ENCODE measurements at regions of chr10 and their contacts with region 1.

Region 1: GRCh38 chr10:116287906-116288501 is 15.0 kb upstream of the GFRA1 start:
- DNase-seq: no peak
- ATAC-seq: no peak
- H3K4me3 ChIP-seq: no peak overlapping the region
- H3K4me3 Mint-ChIP-seq: no peak overlapping the region
- H3K27ac ChIP-seq: no peak overlapping the region
- H3K27ac Mint-ChIP-seq: no peak overlapping the region
- H3K4me1 ChIP-seq: no peaks in the 10 kb centered on the region
- H3K4me1 Mint-ChIP-seq: peaks cover 0 to 2% (median 0%) of the 10 kb centered on the region in 7 donors
- H3K27me3 ChIP-seq: no peaks in the 10 kb centered on the region
- H3K27me3 Mint-ChIP-seq: peaks cover 0 to 16% (median 6%) of the 10 kb centered on the region in 5 donors

Region 2: DNA sequence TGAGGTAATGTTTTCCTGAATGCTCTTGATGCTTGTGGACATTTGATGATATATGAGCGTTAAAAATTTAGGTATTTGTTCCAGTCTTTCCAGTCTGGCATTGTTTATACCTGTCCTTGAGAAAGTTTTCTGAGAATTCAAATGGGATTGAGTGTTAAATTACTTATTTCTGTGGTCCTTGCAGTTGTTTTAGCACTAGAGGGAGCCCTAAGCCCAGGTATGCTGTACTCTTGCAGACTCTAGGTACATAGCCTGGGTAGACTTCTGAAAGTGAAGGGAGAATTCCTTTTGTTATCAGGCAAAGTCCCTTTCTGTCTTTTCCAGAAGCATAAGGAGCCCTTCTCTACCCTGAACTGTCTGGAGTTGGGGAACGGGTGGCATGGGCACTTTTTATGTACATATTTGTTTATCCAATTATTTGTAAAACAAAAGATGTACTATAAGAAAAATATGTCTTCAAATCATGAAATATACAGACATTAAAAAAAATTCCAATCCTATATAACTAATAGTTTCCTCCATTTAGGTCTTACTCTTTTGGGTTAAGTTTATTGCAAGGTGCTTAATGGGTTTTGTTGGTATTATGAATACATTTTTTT is 932.7 kb before region 1 on chr10:
- CTCF ChIA-PET with region 1: no interaction called
- POLR2A ChIA-PET with region 1: no interaction called
- intact Hi-C with region 1: loop called in 1 of 2 experiments (anchors 5 kb)
- DNase-seq: peak in 1 of 9 donors; percentile 2
- ATAC-seq: no peak
- H3K4me3 ChIP-seq: no peak overlapping the region
- H3K4me3 Mint-ChIP-seq: no peak overlapping the region
- H3K27ac ChIP-seq: no peak overlapping the region
- H3K27ac Mint-ChIP-seq: no peak overlapping the region
- H3K4me1 ChIP-seq: no peaks in the 10 kb centered on the region
- H3K4me1 Mint-ChIP-seq: no peaks in the 10 kb centered on the region
- H3K27me3 ChIP-seq: no peaks in the 10 kb centered on the region
- H3K27me3 Mint-ChIP-seq: no peaks in the 10 kb centered on the region

Region 3: GRCh38 chr10:116272440-116273283 is 15.3 kb before region 1 on chr10 and contains the start of gene GFRA1:
- CTCF ChIA-PET with region 1: no interaction called
- POLR2A ChIA-PET with region 1: no interaction called
- intact Hi-C with region 1: no loop called
- DNase-seq: no peak
- ATAC-seq: no peak
- H3K4me3 ChIP-seq: no peak within 1 kb of the TSS
- H3K4me3 Mint-ChIP-seq: peak within 1 kb of the TSS in 8 of 10 donors; percentile 10 to 69 (median 50)
- H3K27ac ChIP-seq: no peak within 1 kb of the TSS
- H3K27ac Mint-ChIP-seq: peak within 1 kb of the TSS in 1 of 9 donors; percentile 71
- H3K4me1 ChIP-seq: no peaks in the 10 kb centered on the region
- H3K4me1 Mint-ChIP-seq: peaks cover 5 to 14% (median 10%) of the 10 kb centered on the region in 7 donors
- H3K27me3 ChIP-seq: peaks cover 0 to 5% of the 10 kb centered on the region in 2 donors
- H3K27me3 Mint-ChIP-seq: peaks cover 65 to 78% (median 73%) of the 10 kb centered on the region in 5 donors
- total RNA-seq, gene GFRA1: not detected

Region 4: GRCh38 chr10:116756277-116756676 is 468.3 kb after region 1 on chr10:
- CTCF ChIA-PET with region 1: no interaction called
- POLR2A ChIA-PET with region 1: no interaction called
- intact Hi-C with region 1: no loop called
- DNase-seq: no peak
- ATAC-seq: no peak
- H3K4me3 ChIP-seq: no peak overlapping the region
- H3K4me3 Mint-ChIP-seq: no peak overlapping the region
- H3K27ac ChIP-seq: no peak overlapping the region
- H3K27ac Mint-ChIP-seq: no peak overlapping the region
- H3K4me1 ChIP-seq: no peaks in the 10 kb centered on the region
- H3K4me1 Mint-ChIP-seq: no peaks in the 10 kb centered on the region
- H3K27me3 ChIP-seq: no peaks in the 10 kb centered on the region
- H3K27me3 Mint-ChIP-seq: peaks cover 17 to 53% (median 40%) of the 10 kb centered on the region in 5 donors

Measured in naive thymus-derived CD4-positive, alpha-beta T cell (primary cell).